ENCODE measurements at regions of chr7 and their contacts with region 1.

Region 1: GRCh38 chr7:43096875-43097274 is 15.6 kb upstream of the HECW1 start:
- DNase-seq: no peak
- H3K4me3 Mint-ChIP-seq: no peak overlapping the region
- H3K27ac Mint-ChIP-seq: no peak overlapping the region
- H3K4me1 Mint-ChIP-seq: no peaks in the 10 kb centered on the region
- H3K27me3 Mint-ChIP-seq: peaks cover 4% of the 10 kb centered on the region

Region 2: GRCh38 chr7:43021431-43021830 is 75.4 kb before region 1 on chr7:
- CTCF ChIA-PET with region 1: no interaction called
- POLR2A ChIA-PET with region 1: no interaction called
- intact Hi-C with region 1: loop called (anchors 10 kb)
- DNase-seq: no peak
- H3K4me3 Mint-ChIP-seq: no peak overlapping the region
- H3K27ac Mint-ChIP-seq: no peak overlapping the region
- H3K4me1 Mint-ChIP-seq: no peaks in the 10 kb centered on the region
- H3K27me3 Mint-ChIP-seq: peaks cover 5% of the 10 kb centered on the region

Measured in activated CD4-positive, alpha-beta memory T cell treated with anti-CD3 and anti-CD28 coated beads for 36 hours (primary cell).